OCI-LY7 (cell line): ENCODE measurements at regions of chr3 and their contacts with region 1.

Region 1: DNA sequence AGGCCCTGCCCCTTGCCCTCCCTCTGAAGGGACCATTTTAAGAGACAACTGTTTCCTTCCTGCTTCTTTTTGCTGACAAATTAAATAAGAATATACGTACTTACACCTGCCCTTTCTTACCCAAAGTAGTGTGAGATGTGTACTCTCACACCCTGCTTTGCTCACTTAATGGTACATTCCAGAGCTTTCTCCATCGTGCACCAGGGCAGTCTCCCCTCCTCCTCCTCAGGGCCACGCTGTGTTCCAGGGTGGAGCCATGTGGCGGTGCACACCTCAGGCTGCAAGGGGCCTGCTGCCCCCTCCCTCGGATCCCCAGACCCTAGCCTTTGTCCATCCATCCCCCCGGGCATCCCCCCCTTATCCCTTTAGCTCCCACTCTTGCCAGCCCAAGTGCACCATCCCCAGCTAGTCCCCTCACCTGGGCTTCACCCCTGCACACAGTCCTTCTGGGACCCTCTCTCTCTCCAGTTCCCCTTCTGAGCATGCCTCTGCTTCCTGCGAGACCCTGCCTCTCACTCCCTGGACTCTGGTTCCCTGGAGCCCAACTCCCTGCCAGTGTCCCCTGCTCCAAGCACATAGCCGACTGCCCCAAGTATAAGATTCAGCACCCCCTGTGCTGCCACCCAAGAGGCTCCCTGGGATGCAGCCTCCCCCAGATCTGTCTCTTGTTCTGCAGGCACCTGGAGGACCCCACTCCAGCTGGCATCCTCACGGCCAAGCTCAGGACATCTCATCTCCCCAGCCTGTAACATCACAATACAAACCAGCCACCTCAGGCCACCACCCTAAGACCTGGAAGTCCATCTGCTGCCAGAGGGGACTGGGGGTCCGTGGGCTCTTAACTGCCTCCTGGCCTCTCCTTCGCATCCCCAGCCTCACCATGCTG is 89.6 kb upstream of the IQSEC1 start:
- DNase-seq: no peak
- H3K4me3 ChIP-seq: no peak overlapping the region
- H3K27ac ChIP-seq: no peak overlapping the region
- H3K4me1 ChIP-seq: no peaks in the 10 kb centered on the region
- CTCF ChIP-seq: no peak

Region 2: GRCh38 chr3:12916159-12916558 is 246.6 kb before region 1 on chr3:
- CTCF ChIA-PET with region 1: no interaction called
- POLR2A ChIA-PET with region 1: no interaction called
- intact Hi-C with region 1: no loop called
- DNase-seq: no peak
- H3K4me3 ChIP-seq: no peak overlapping the region
- H3K27ac ChIP-seq: no peak overlapping the region
- H3K4me1 ChIP-seq: peaks cover 10% of the 10 kb centered on the region
- CTCF ChIP-seq: no peak

Region 3: DNA sequence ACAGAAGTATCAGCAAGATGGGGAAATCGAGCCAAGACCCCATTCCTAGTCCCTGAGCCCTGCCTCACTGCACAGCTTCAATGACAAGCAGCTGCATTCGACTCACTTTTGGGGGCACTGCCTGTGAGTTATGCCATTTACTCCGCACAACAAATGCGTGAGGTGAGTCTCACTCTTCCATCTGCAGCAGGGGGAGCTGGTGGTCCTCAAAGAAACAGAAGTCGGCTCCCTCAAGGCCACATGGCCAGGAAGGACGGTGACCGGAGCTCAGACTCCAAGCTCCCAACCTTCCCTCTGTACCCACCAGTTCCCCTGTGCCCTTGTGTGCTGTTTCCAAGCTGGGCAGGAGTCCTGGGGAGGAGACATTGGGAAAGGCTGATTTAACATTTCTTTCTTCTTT is 38.2 kb after region 1 on chr3:
- CTCF ChIA-PET with region 1: interaction called, 11 read pairs
- POLR2A ChIA-PET with region 1: interaction called, 3 read pairs
- intact Hi-C with region 1: no loop called
- DNase-seq: peak; percentile 39
- H3K4me3 ChIP-seq: no peak overlapping the region
- H3K27ac ChIP-seq: no peak overlapping the region
- H3K4me1 ChIP-seq: peaks cover 9% of the 10 kb centered on the region
- CTCF ChIP-seq: peak; percentile 58